PC-9 (cell line): ENCODE measurements at regions of chr1 and their contacts with region 1.

Region 1: GRCh38 chr1:54542120-54542961 is 5.7 kb upstream of the ACOT11 start:
- DNase-seq: peak; percentile 77 to 94
- H3K4me3 ChIP-seq: peak overlapping the region; percentile 62; the same call in 1 of the 2 replicates
- H3K27ac ChIP-seq: no peak overlapping the region
- H3K4me1 ChIP-seq: peaks cover 6% of the 10 kb centered on the region; the same call in 1 of the 2 replicates
- H3K27me3 ChIP-seq: no peaks in the 10 kb centered on the region
- CTCF ChIP-seq: no peak; the same call in 1 of the 2 replicates

Region 2: DNA sequence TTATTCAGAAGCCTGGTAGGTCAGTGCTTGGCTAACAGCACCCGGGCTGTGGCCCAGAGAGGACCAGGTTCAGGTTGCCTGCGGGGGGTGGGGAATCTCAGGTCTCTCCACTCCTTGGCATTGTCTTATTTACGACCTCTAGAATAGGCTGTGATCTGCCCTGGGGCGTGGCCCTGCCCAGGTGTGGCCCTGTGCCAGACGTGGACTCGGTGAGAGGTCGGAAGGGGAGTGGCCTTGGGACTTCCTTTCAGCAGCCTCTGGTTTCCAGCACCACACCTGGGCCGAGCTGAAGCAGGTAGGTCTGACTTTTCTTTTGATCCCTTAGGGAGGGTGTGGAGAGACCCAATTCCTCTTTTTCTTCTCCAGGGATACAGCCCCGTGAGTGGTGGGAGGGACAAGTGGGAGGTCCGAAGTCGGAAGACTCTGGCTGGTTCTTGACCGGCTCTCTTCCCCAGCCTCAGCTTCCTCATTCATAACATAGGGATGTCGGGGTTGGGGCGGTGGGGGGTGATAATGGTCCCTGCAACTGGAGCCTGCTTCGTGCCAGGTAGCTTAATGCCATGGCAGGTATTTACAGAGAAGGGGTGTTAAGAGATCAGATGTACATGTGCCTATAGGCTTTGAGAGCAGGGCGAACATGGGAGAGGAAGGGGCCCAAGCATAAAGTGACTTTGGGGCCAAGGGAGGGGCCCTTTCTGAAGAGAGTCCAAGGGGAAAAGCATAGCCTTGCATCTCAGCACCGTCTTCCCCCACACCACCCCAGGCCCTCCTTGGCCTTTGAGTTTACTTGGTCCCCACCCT is 22.2 kb after region 1 on chr1:
- CTCF ChIA-PET with region 1: interaction called, 3 read pairs
- POLR2A ChIA-PET with region 1: no interaction called
- intact Hi-C with region 1: loop called (anchors 1 kb)
- DNase-seq: peak; percentile 89 to 99
- H3K4me3 ChIP-seq: peak overlapping the region; percentile 44; the same call in 1 of the 2 replicates
- H3K27ac ChIP-seq: peak overlapping the region; percentile 40
- H3K4me1 ChIP-seq: peaks cover 40% of the 10 kb centered on the region
- H3K27me3 ChIP-seq: no peaks in the 10 kb centered on the region
- CTCF ChIP-seq: no peak

Region 3: GRCh38 chr1:54581621-54582035 is 39.3 kb after region 1 on chr1:
- CTCF ChIA-PET with region 1: no interaction called
- POLR2A ChIA-PET with region 1: no interaction called
- intact Hi-C with region 1: loop called (anchors 1 kb)
- DNase-seq: peak; percentile 69 to 94
- H3K4me3 ChIP-seq: no peak overlapping the region
- H3K27ac ChIP-seq: no peak overlapping the region
- H3K4me1 ChIP-seq: no peaks in the 10 kb centered on the region
- H3K27me3 ChIP-seq: no peaks in the 10 kb centered on the region
- CTCF ChIP-seq: no peak